AG04449 (cell line): ENCODE measurements at regions of chr20 and their contacts with region 1.

Region 1: DNA sequence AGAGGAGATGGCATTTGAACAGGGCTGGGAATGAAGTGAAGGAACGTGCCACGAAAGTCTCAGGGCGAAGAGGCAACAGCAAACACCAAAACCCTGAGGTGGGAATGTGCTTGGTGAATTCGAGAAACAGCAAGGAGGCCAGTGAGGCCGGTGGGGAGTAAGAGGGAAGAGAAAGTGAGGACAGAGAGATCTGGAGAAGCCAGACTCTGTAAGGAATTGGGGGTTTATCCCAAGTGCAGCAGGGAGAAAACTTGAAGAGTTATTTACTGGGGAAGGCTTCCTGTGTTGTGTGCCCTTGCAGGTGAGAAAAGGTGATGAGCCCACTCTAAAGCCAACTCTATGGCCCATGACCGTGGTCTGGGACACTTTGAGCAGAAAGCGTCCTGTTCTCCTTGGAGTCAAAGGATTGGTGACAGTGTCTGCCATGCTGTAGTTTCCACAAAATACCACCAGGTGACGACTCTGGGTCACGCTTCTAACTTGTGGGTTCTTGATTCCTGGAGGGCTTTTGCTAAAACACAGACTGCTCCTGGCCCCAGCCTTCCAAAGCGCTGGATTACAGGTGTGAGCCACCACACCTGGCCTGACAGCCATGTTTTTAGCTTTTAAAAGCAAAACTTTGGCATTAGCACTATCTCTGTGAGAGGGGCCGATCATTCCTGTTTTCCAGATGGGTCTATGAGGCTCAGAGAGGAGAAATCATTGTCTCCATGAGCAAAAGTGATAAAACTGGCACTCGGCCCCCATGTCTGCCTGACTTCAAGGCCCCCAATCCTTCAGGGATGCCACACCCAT is 18.0 kb upstream of the CSNK2A1 start:
- DNase-seq: no peak
- H3K4me3 ChIP-seq: no peak overlapping the region
- CTCF ChIP-seq: peak; percentile 94

Region 2: GRCh38 chr20:543369-544152 is 18.1 kb before region 1 on chr20 and contains the start of gene CSNK2A1:
- CTCF ChIA-PET with region 1: interaction called, 18 read pairs
- POLR2A ChIA-PET with region 1: no interaction called
- DNase-seq: peak; percentile 57
- H3K4me3 ChIP-seq: peak within 1 kb of the TSS; percentile 89
- CTCF ChIP-seq: no peak

Region 3: GRCh38 chr20:645318-646106 is 83.9 kb after region 1 on chr20:
- CTCF ChIA-PET with region 1: interaction called, 96 read pairs
- POLR2A ChIA-PET with region 1: no interaction called
- DNase-seq: no peak
- H3K4me3 ChIP-seq: no peak overlapping the region
- CTCF ChIP-seq: peak; percentile 96

Region 4: DNA sequence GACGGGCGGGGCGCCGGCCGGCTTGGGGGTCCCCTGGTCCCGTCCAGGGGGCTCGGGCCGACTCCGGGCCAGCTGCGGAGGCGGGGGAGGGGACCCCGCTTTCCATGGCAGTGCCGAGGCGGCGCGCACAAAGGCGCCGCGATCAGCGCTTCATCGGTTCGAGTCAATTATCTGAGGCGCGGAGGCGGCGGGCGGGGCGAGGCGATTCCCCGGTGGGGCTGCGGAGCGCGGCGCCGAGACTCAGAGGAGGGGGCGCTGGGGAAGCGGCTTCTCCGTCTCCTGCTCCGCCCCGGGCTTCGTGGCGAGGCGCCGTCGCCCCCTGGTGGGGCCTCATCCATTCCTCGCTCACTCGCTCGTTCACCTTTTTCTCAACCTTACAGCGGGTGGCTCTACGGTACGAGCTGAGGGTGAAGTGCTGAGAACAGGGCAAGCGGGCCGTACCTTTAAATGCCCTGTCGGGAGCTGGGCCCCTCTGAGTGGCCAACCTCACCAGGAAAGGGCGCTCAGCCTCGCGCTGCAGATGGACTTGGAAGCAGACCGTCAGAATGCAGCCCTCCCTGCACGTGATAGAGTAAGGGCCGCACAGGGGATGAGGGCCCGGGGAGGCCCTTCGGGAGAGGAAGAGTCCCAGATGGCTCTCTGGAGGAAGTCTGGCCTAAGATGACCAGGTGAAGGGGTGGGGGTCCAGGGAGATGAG is 166.8 kb after region 1 on chr20:
- CTCF ChIA-PET with region 1: interaction called, 55 read pairs
- POLR2A ChIA-PET with region 1: no interaction called
- DNase-seq: no peak
- H3K4me3 ChIP-seq: peak overlapping the region; percentile 38
- CTCF ChIP-seq: peak; percentile 70

Region 5: GRCh38 chr20:740141-740540 is 178.5 kb after region 1 on chr20:
- CTCF ChIA-PET with region 1: interaction called, 122 read pairs
- POLR2A ChIA-PET with region 1: no interaction called
- DNase-seq: no peak
- H3K4me3 ChIP-seq: no peak overlapping the region
- CTCF ChIP-seq: no peak